Left cardiac atrium (tissue), 4 donors: ENCODE measurements at regions of chr16 and their contacts with region 1.

Region 1: GRCh38 chr16:89641458-89642119 is 15.9 kb downstream of the CHMP1A start:
- DNase-seq: no peak
- ATAC-seq: no peak

Region 2: DNA sequence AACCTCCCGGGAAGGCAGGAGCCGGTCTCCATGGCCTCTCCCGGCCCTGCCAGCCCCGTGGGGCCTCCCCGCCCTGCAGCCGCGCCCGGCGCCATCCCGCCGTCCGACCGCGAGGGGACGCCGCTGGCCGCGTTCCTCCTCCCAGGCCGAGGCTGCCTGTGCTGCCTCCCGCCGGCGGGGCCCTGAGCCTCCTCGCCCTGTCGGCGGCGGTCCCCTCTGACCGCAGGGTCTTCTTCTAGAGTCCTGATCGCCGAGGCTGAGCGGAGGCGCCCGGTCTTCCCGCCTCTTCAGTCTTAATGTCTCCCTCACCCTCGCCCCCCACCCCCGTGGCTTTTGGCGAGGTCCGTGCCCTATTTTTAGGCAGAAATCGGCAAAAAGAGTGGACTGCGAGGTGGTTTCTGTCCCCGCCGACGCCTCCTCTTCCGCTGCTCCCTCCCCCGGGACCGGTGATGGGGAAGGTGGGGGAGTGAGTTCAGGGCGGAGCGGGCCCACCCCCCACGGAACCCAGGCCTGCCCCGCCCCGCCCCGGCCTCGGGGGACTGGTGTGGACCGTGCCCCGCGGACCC is 66.8 kb before region 1 on chr16:
- intact Hi-C with region 1: loop called in 1 of 2 experiments (anchors 5 kb)
- DNase-seq: peak; percentile 57
- ATAC-seq: peak; percentile 66 to 76

Region 3: DNA sequence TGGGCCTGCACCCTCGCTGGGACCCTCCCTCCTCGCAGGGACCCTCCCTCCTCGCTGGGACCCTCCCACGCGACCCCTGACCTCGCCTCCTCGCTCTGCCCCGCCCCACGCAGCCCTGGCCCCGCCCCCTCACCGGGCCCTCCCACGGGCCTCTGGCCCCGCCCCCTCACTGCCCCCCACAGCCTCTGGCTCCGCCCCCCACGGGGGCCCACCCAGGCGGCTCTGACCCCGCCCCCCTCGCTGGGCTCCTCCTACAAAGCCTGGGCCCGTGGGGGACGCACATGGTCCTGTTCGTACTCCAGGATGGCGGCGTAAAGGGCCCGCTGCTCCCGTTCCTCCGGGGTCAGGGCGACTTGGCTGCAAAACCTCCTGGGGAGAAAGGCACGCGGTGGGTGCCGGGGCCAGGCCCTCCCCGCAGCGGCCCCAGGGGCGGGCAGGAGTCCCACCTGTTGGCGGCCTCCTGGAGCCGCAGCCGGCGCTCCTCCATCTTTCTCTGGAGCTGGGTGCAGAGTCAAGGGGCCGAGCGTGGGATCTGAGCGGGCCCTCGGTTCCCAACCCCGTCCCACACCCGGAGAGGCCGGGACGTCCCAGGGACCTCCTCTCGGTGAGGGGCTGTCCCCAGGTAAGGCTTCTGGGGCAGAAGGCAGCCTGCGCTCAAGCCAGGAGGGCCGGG is 70.1 kb after region 1 on chr16:
- intact Hi-C with region 1: no loop called
- DNase-seq: peak; percentile 58
- ATAC-seq: peak; percentile 63 to 69